HEK293T (cell line): ENCODE measurements at regions of chr18 and their contacts with region 1.

Region 1: DNA sequence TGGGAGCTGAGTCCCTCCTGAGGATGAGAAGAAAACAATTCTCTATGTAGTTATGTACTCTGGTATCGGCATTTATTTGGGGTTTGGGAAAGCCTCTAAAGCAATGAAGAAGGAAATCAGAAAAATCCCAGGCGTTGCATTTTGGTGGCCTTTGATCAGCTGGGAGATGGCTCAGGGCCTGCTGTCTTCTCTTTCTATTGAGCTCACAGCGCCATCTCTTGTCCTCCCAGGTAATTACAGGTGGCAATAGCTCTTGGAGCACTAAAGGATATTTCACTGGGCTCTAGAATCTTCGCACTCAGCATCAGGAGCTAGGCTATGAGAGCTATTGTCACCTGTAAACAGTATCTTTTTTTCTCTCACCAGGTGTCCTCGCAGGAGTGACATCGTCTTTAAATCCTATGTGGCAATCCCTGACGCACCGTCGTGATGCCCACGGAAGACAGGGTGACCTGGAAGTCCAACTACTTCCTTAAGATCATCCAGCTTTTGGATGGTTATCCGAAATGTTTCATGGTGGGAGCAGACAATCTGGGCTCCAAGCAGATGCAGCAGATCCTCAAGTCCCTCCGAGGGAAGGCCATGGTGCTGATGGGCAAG is 76.1 kb upstream of the PMAIP1 start:
- DNase-seq: peak; percentile 54

Region 2: DNA sequence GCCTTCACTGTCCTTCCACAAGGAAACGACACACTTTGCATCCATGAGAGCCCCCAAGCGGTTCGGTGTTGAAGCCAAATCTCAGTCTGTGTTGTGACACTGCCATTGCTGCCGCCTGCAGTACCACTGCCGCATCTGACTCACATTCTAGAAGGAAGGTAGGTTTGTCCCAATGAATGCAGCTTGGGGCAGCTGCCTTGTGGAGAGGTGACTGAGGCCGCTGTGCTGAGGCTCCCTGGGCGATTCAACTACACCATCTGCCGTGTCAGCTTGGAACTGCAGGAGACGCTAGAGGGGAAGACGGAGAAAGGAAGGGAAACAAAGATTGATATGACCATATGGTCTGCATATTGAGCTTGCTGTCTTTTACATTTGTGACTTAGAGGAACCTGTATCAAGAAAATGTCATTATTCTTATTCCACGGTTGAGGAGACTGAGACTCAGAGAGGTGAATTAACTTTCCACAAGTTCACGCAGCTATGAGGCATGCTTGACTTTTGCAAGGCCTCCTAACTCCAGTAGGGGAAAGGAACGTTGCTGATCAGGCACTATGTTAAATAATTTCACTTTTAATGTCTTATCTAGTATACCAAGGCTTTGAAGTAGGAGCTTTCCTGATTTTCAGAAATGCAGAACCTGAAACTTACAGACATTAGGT is 421.1 kb before region 1 on chr18:
- CTCF ChIA-PET with region 1: interaction called, 10 read pairs
- POLR2A ChIA-PET with region 1: no interaction called
- DNase-seq: peak; percentile 83

Region 3: GRCh38 chr18:59459369-59460079 is 364.2 kb before region 1 on chr18:
- CTCF ChIA-PET with region 1: interaction called, 35 read pairs
- POLR2A ChIA-PET with region 1: no interaction called
- DNase-seq: peak; percentile 15

Region 4: GRCh38 chr18:59631583-59632181 is 192.0 kb before region 1 on chr18:
- CTCF ChIA-PET with region 1: interaction called, 25 read pairs
- POLR2A ChIA-PET with region 1: no interaction called
- DNase-seq: peak; percentile 14

Region 5: GRCh38 chr18:59697236-59697932 is 126.3 kb before region 1 on chr18 and contains the start of gene CCBE1:
- CTCF ChIA-PET with region 1: interaction called, 14 read pairs
- POLR2A ChIA-PET with region 1: no interaction called
- DNase-seq: peak; percentile 70

Region 6: DNA sequence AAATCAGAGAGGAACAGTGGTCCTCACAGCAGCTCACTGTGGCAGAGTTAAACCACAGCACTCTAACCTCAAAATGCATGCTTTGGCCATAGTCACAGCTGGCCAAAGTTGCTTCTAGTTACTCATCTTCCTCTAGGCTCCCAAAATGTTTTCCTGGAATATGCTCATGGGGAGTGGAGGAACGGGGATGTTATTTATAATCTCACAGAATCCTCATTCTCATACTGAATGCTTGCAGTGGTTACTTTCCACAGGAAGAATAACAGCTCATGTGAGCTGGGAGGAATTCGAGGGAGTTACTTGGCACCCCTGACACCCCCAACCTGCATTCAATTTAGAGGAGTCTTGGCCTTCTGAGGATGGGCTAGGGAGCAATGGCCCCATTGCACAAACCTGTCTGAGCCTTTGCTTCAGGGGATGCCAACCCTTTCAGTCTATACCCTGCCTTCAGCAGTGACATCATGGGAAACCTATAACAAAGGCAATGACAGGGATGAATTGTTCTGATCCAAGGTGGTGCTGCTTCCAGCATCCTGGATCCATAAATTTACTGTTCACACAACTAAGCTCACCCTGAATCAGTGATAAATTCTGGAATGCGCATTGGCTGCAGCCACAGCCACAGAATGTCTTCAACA is 104.0 kb before region 1 on chr18:
- CTCF ChIA-PET with region 1: no interaction called
- POLR2A ChIA-PET with region 1: no interaction called
- DNase-seq: no peak

Region 7: DNA sequence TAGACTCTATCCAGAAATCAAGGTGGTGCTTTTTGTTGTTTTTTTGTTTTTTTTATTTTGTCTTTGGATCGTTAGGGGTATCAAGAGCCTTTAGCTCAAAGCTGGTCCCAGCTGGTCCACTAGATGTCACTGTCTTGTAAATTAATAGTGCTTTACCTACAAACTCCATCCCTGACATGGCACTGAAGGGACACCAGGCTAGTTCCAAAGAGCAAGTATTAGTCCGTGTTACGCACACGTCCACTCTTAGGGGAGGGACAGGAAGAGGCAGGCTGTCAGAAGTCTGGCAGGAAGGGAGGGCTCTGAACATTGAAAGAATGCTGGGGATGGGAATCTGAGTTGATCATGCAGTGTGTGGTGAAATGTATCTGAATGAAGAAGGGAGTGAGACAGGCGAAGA is 40.6 kb before region 1 on chr18:
- CTCF ChIA-PET with region 1: interaction called, 11 read pairs
- POLR2A ChIA-PET with region 1: interaction called, 4 read pairs
- DNase-seq: peak; percentile 45

Region 8: GRCh38 chr18:59837586-59837985 is 13.9 kb after region 1 on chr18:
- CTCF ChIA-PET with region 1: interaction called, 14 read pairs
- POLR2A ChIA-PET with region 1: no interaction called
- DNase-seq: peak; percentile 50